Naive thymus-derived CD4-positive, alpha-beta T cell (primary cell): ENCODE measurements at regions of chr7 and their contacts with region 1.

Region 1: GRCh38 chr7:24979863-24980533 is at the start of gene OSBPL3:
- DNase-seq: peak; percentile 86 to 96 (median 93)
- ATAC-seq: peak; percentile 95
- H3K4me3 ChIP-seq: peak within 1 kb of the TSS; percentile 84
- H3K4me3 Mint-ChIP-seq: peak within 1 kb of the TSS; percentile 93 to 97 (median 96)
- H3K27ac ChIP-seq: peak within 1 kb of the TSS; percentile 69
- H3K27ac Mint-ChIP-seq: peak within 1 kb of the TSS; percentile 73 to 95 (median 89)
- H3K4me1 ChIP-seq: peaks cover 26 to 32% of the 10 kb centered on the region in 2 donors
- H3K4me1 Mint-ChIP-seq: peaks cover 40 to 65% (median 56%) of the 10 kb centered on the region in 7 donors
- H3K27me3 ChIP-seq: no peaks in the 10 kb centered on the region
- H3K27me3 Mint-ChIP-seq: peaks cover 0 to 4% (median 0%) of the 10 kb centered on the region in 5 donors
- total RNA-seq, gene OSBPL3: 17.1 to 75.7 (median 22.7) TPM

Region 2: GRCh38 chr7:23105644-23106056 is 1874.3 kb before region 1 on chr7 and contains the start of gene KLHL7:
- CTCF ChIA-PET with region 1: no interaction called
- POLR2A ChIA-PET with region 1: no interaction called
- intact Hi-C with region 1: loop called in 1 of 2 experiments (anchors 2 kb)
- DNase-seq: peak; percentile 90 to 95 (median 93)
- ATAC-seq: peak; percentile 99
- H3K4me3 ChIP-seq: peak within 1 kb of the TSS; percentile 93
- H3K4me3 Mint-ChIP-seq: peak within 1 kb of the TSS; percentile 90 to 99 (median 96)
- H3K27ac ChIP-seq: peak within 1 kb of the TSS; percentile 90
- H3K27ac Mint-ChIP-seq: peak within 1 kb of the TSS; percentile 91 to 97 (median 96)
- H3K4me1 ChIP-seq: peaks cover 4 to 18% of the 10 kb centered on the region in 2 donors
- H3K4me1 Mint-ChIP-seq: peaks cover 33 to 51% (median 47%) of the 10 kb centered on the region in 7 donors
- H3K27me3 ChIP-seq: no peaks in the 10 kb centered on the region
- H3K27me3 Mint-ChIP-seq: no peaks in the 10 kb centered on the region
- total RNA-seq, gene KLHL7: 16.9 to 22.9 (median 22.7) TPM

Region 3: GRCh38 chr7:24907311-24907886 is 72.6 kb before region 1 on chr7:
- CTCF ChIA-PET with region 1: interaction called, 3 read pairs
- POLR2A ChIA-PET with region 1: interaction called, 14 read pairs
- intact Hi-C with region 1: loop called (anchors 1 kb)
- DNase-seq: peak in 1 of 9 donors; percentile 49
- ATAC-seq: peak; percentile 56
- H3K4me3 ChIP-seq: peak overlapping the region; percentile 8
- H3K4me3 Mint-ChIP-seq: no peak overlapping the region
- H3K27ac ChIP-seq: no peak overlapping the region
- H3K27ac Mint-ChIP-seq: no peak overlapping the region
- H3K4me1 ChIP-seq: peaks cover 33 to 84% of the 10 kb centered on the region in 2 donors
- H3K4me1 Mint-ChIP-seq: peaks cover 26 to 47% (median 29%) of the 10 kb centered on the region in 7 donors
- H3K27me3 ChIP-seq: no peaks in the 10 kb centered on the region
- H3K27me3 Mint-ChIP-seq: no peaks in the 10 kb centered on the region

Region 4: DNA sequence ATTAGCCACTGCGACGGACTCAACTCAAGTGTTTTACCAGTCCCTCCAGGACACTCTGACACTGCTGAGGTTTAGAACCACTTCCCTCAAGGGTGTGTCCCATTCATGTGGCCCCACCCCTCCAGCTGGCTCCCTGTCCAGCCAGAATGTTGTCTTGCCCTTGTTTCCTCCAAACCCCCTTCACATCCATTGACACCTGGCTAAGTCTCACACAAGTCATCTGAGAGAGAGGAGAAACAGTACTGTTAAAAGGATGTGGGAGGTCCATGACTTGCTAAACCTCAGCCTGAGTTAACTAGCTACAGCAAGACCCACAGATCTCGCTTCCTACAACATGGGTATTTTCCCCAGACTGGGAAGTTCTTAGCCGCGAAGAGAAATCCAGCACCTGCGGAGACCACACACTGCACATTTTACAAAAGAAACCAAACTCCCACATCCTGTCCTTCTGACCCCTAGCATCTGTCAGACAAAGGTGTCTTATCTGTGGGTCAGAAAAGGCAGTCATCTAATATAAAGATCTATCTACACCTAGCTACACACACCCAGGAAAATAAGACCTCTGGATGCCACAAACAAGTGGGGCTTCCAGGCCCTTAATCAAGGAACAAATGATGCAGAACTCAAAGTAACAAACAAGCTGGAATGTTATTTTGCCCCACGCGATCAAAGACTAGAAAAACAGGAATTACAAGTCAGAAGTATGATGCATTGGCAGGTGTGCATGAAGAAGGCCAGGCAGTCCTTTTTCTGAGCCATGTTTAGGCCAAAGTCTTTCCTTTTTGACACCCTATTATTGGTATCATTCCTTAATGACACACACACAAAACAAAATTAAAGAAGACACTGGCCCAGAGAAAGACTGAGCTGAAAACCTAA is 13.9 kb before region 1 on chr7:
- CTCF ChIA-PET with region 1: interaction called, 5 read pairs
- POLR2A ChIA-PET with region 1: interaction called, 20 read pairs
- intact Hi-C with region 1: loop called (anchors 1 kb)
- DNase-seq: peak in 6 of 9 donors; percentile 13 to 54 (median 18)
- ATAC-seq: peak; percentile 84
- H3K4me3 ChIP-seq: no peak overlapping the region
- H3K4me3 Mint-ChIP-seq: peak overlapping the region; percentile 7 to 69 (median 49)
- H3K27ac ChIP-seq: peak overlapping the region; percentile 2
- H3K27ac Mint-ChIP-seq: peak overlapping the region; percentile 14 to 89 (median 73)
- H3K4me1 ChIP-seq: peaks cover 24 to 55% of the 10 kb centered on the region in 2 donors
- H3K4me1 Mint-ChIP-seq: peaks cover 55 to 75% (median 58%) of the 10 kb centered on the region in 7 donors
- H3K27me3 ChIP-seq: no peaks in the 10 kb centered on the region
- H3K27me3 Mint-ChIP-seq: no peaks in the 10 kb centered on the region

Region 5: GRCh38 chr7:25069900-25070443 is 90.0 kb after region 1 on chr7:
- CTCF ChIA-PET with region 1: interaction called, 6 read pairs
- POLR2A ChIA-PET with region 1: interaction called, 3 read pairs
- intact Hi-C with region 1: loop called (anchors 1 kb)
- DNase-seq: peak in 8 of 9 donors; percentile 27 to 63 (median 54)
- ATAC-seq: peak; percentile 74
- H3K4me3 ChIP-seq: no peak overlapping the region
- H3K4me3 Mint-ChIP-seq: no peak overlapping the region
- H3K27ac ChIP-seq: no peak overlapping the region
- H3K27ac Mint-ChIP-seq: no peak overlapping the region
- H3K4me1 ChIP-seq: no peaks in the 10 kb centered on the region
- H3K4me1 Mint-ChIP-seq: peaks cover 0 to 17% (median 0%) of the 10 kb centered on the region in 7 donors
- H3K27me3 ChIP-seq: no peaks in the 10 kb centered on the region
- H3K27me3 Mint-ChIP-seq: no peaks in the 10 kb centered on the region